BJ (cell line): ENCODE measurements at regions of chr2 and their contacts with region 1.

Region 1: GRCh38 chr2:231706731-231707624 is 1.3 kb upstream of the PTMA start:
- DNase-seq: peak; percentile 81
- H3K4me3 ChIP-seq: peak overlapping the region; percentile 58
- H3K27me3 ChIP-seq: no peaks in the 10 kb centered on the region
- CTCF ChIP-seq: peak; percentile 95

Region 2: DNA sequence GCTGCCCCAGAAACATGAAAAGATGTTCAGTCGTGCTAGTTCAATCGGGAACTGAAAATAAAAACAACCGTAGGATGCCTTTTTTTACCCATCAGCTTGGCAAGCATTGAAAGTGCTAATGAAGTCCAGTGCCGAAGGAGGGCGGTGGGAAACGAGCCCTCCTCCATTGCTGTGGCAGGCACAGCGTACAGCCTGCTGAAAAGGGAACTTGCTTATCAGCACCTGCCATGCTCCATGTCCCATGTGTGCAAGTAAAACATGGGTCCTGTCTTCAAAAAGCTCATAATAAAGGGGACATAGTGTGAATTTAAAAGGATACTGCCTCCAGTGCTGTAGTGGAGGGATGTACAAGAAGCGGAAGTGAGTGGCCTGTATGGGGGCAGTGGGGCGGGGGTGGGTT is 426.1 kb before region 1 on chr2:
- CTCF ChIA-PET with region 1: no interaction called
- POLR2A ChIA-PET with region 1: no interaction called
- DNase-seq: no peak
- H3K4me3 ChIP-seq: no peak overlapping the region
- H3K27me3 ChIP-seq: no peaks in the 10 kb centered on the region
- CTCF ChIP-seq: no peak

Region 3: DNA sequence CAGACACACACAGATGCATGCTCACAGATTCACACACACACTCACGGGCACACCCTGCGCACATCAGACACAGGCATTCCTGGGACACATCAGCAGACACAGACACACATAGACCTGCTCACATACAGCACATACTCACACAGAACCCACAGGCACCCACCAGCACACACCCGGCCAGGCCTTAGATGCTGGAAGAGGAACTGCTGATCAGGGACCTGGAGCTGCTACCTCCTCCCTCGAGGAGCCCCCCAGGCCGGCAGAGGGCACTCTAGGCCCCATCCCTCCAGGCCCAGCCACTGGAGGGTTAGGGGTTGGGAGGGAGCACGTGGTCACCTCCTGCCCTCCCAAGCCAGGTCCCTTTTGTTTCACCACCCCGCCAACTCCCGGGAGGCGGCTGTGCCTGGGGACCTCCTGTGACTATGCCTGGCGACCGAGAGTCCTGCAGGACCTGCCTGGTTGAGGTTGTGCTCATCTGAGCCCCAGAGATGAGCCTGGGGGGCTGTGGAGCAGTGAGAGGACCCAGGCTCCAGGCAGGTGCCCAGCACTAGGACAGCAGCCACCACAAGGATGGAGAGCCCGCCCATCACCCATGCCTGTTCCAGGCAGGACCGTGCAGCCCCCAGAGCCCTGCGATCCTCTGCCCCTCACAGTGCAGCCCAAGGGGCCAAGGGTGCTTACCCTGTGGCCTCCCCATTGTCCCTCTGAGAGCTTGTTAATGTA is 19.7 kb before region 1 on chr2:
- CTCF ChIA-PET with region 1: interaction called, 719 read pairs
- POLR2A ChIA-PET with region 1: interaction called, 15 read pairs
- DNase-seq: no peak
- H3K4me3 ChIP-seq: no peak overlapping the region
- H3K27me3 ChIP-seq: no peaks in the 10 kb centered on the region
- CTCF ChIP-seq: peak; percentile 73

Region 4: GRCh38 chr2:231696007-231696371 is 11.0 kb before region 1 on chr2:
- CTCF ChIA-PET with region 1: interaction called, 719 read pairs
- POLR2A ChIA-PET with region 1: interaction called, 6 read pairs
- DNase-seq: peak; percentile 87
- H3K4me3 ChIP-seq: no peak overlapping the region
- H3K27me3 ChIP-seq: no peaks in the 10 kb centered on the region
- CTCF ChIP-seq: no peak